ENCODE measurements at regions of chr15 and their contacts with region 1.

Region 1: GRCh38 chr15:90560229-90560776 is 30.6 kb downstream of the CRTC3 start:
- DNase-seq: no peak
- ATAC-seq: no peak
- H3K4me3 Mint-ChIP-seq: no peak overlapping the region
- H3K27ac Mint-ChIP-seq: peak overlapping the region; percentile 87
- H3K4me1 Mint-ChIP-seq: peaks cover 79% of the 10 kb centered on the region
- H3K27me3 Mint-ChIP-seq: no peaks in the 10 kb centered on the region

Region 2: DNA sequence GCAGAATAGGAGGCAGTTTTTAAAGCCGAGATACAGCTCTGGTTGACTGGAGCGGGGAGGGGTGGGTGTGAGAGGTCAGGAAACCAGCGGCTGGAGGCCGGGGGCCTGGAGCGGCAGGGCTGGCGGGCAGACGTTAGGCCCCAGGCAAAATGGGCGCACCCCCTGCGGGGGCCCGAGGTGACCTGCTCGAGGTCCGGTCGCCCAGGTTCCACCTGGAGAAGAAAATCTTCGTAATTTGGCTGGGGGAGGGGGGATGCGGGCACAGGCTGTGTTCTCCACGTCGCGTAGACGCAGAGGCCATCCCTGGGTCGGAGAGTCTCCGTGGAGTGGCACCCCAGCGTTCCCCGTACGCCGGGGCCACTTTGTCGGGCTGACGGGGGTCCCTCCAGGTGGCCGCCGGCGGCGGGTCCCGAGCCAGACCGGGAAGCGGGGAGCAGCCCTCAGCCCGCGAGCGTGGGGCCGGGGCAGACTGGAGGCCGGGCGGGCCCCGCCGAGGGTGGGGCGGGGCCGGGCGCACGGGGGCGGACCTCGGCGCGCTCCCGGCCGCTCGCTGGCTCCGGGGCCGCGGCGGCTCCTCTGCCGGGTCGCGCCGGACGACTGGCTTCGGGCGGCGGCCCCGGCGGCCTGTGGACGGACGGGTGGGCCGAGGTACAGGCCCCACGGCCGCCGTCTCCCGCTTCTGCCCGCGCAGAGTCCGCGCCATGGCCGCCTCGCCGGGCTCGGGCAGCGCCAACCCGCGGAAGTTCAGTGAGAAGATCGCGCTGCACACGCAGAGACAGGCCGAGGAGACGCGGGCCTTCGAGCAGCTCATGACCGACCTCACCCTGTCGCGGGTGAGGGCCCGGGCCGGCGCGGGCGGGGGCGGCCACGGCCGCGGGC is 30.7 kb before region 1 on chr15 and contains the start of gene CRTC3:
- POLR2A ChIA-PET with region 1: interaction called, 23 read pairs
- DNase-seq: peak; percentile 82
- ATAC-seq: peak; percentile 84
- H3K4me3 Mint-ChIP-seq: peak within 1 kb of the TSS; percentile 96
- H3K27ac Mint-ChIP-seq: peak within 1 kb of the TSS; percentile 88
- H3K4me1 Mint-ChIP-seq: peaks cover 32% of the 10 kb centered on the region
- H3K27me3 Mint-ChIP-seq: no peaks in the 10 kb centered on the region
- total RNA-seq, gene CRTC3: 70.5 to 74.1 TPM

Region 3: GRCh38 chr15:90539789-90540188 is 20.5 kb before region 1 on chr15:
- POLR2A ChIA-PET with region 1: interaction called, 10 read pairs
- DNase-seq: no peak
- ATAC-seq: peak; percentile 76
- H3K4me3 Mint-ChIP-seq: peak overlapping the region; percentile 88
- H3K27ac Mint-ChIP-seq: peak overlapping the region; percentile 96
- H3K4me1 Mint-ChIP-seq: peaks cover 45% of the 10 kb centered on the region
- H3K27me3 Mint-ChIP-seq: no peaks in the 10 kb centered on the region

Region 4: GRCh38 chr15:90572893-90573292 is 12.6 kb after region 1 on chr15:
- POLR2A ChIA-PET with region 1: interaction called, 10 read pairs
- DNase-seq: no peak
- ATAC-seq: no peak
- H3K4me3 Mint-ChIP-seq: peak overlapping the region; percentile 74
- H3K27ac Mint-ChIP-seq: peak overlapping the region; percentile 81
- H3K4me1 Mint-ChIP-seq: peaks cover 73% of the 10 kb centered on the region
- H3K27me3 Mint-ChIP-seq: no peaks in the 10 kb centered on the region

Region 5: GRCh38 chr15:90594301-90594701 is 34.0 kb after region 1 on chr15:
- POLR2A ChIA-PET with region 1: interaction called, 10 read pairs
- DNase-seq: peak; percentile 70
- ATAC-seq: peak; percentile 76
- H3K4me3 Mint-ChIP-seq: peak overlapping the region; percentile 85
- H3K27ac Mint-ChIP-seq: peak overlapping the region; percentile 98
- H3K4me1 Mint-ChIP-seq: peaks cover 67% of the 10 kb centered on the region
- H3K27me3 Mint-ChIP-seq: no peaks in the 10 kb centered on the region

Region 6: DNA sequence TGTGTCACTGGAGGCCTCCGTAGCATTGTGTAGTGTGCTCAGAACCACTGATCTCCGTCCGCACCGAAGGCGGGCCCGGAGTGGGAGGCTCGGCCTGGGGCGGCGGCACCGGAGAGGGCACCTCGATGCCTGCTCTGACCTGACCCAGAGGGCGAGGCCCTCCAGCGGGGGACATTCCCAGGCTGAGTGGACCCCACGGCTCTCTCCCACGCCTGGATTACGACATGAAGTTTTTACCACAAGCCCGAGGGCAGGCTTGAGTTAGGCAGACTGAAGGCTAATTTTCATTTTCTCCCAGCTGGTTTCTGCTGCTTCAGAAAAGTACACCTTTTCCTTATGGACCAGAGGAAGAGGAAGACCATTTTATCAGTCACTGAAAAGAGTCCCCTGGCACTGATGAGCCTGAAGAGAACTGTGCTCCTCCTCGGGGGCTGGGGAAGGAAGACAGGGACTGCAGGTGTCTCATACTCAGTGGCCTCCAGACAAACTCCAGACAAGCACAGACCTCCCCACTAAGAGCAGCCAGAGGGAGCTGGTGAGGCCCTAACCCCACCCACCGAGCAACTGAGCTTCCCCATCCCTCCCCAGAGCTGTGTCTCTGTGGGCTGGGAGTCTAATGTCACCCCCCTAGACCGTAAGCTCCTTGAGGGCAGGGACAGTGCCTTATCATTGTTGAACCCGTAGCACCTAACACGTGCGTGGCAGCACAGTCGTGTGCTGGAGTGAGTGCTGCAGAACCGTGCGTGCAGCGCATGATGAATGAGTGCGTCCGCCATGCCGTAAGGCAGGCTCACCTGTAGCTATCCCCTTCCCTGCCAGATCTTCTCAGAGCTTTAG is 82.4 kb after region 1 on chr15:
- POLR2A ChIA-PET with region 1: no interaction called
- DNase-seq: no peak
- ATAC-seq: peak; percentile 12
- H3K4me3 Mint-ChIP-seq: no peak overlapping the region
- H3K27ac Mint-ChIP-seq: no peak overlapping the region
- H3K4me1 Mint-ChIP-seq: peaks cover 7% of the 10 kb centered on the region
- H3K27me3 Mint-ChIP-seq: no peaks in the 10 kb centered on the region